ENCODE measurements at regions of chr9 and their contacts with region 1.

Region 1: GRCh38 chr9:15430920-15431844 is 8.5 kb downstream of the SNAPC3 start:
- DNase-seq: no peak
- ATAC-seq: no peak
- H3K4me3 ChIP-seq: no peak overlapping the region
- H3K4me3 Mint-ChIP-seq: no peak overlapping the region
- H3K27ac ChIP-seq: peak overlapping the region in 1 of 2 donors; percentile 14
- H3K27ac Mint-ChIP-seq: peak overlapping the region; percentile 13
- H3K4me1 ChIP-seq: peaks cover 11% of the 10 kb centered on the region
- H3K4me1 Mint-ChIP-seq: peaks cover 60% of the 10 kb centered on the region
- H3K27me3 ChIP-seq: no peaks in the 10 kb centered on the region
- H3K27me3 Mint-ChIP-seq: no peaks in the 10 kb centered on the region
- CTCF ChIP-seq: no peak

Region 2: GRCh38 chr9:15469406-15469805 is 38.2 kb after region 1 on chr9:
- CTCF ChIA-PET with region 1: interaction called, 4 read pairs
- POLR2A ChIA-PET with region 1: no interaction called
- intact Hi-C with region 1: loop called in 1 of 2 experiments (anchors 5 kb)
- DNase-seq: no peak
- ATAC-seq: no peak
- H3K4me3 ChIP-seq: no peak overlapping the region
- H3K4me3 Mint-ChIP-seq: no peak overlapping the region
- H3K27ac ChIP-seq: no peak overlapping the region
- H3K27ac Mint-ChIP-seq: peak overlapping the region; percentile 6
- H3K4me1 ChIP-seq: no peaks in the 10 kb centered on the region
- H3K4me1 Mint-ChIP-seq: peaks cover 7% of the 10 kb centered on the region
- H3K27me3 ChIP-seq: no peaks in the 10 kb centered on the region
- H3K27me3 Mint-ChIP-seq: no peaks in the 10 kb centered on the region
- CTCF ChIP-seq: no peak

Measured in CD4-positive, alpha-beta T cell (primary cell).